ENCODE measurements at regions of chr17 and their contacts with region 1.

Region 1: GRCh38 chr17:8402921-8403536 is 5.4 kb upstream of the RNF222 start:
- DNase-seq: peak; percentile 57
- H3K4me3 ChIP-seq: no peak overlapping the region
- H3K27ac ChIP-seq: no peak overlapping the region
- H3K4me1 ChIP-seq: no peaks in the 10 kb centered on the region
- H3K27me3 ChIP-seq: peaks cover 0 to 4% of the 10 kb centered on the region in 2 experiments
- CTCF ChIP-seq: no peak
- POLR2A ChIP-seq: no peak

Region 2: GRCh38 chr17:7997186-7997585 is 405.8 kb before region 1 on chr17:
- CTCF ChIA-PET with region 1: no interaction called
- POLR2A ChIA-PET with region 1: no interaction called
- dilution Hi-C with region 1: no loop called
- intact Hi-C with region 1: loop called (anchors 5 kb)
- DNase-seq: peak; percentile 36
- H3K4me3 ChIP-seq: no peak overlapping the region
- H3K27ac ChIP-seq: no peak overlapping the region
- H3K4me1 ChIP-seq: no peaks in the 10 kb centered on the region
- H3K27me3 ChIP-seq: peaks cover 26 to 39% of the 10 kb centered on the region in 2 experiments
- CTCF ChIP-seq: peak; percentile 13 to 21
- POLR2A ChIP-seq: no peak